ENCODE measurements at regions of chr1 and their contacts with region 1.

Region 1: GRCh38 chr1:6245086-6245868 is 1.3 kb downstream of the HES3 start:
- DNase-seq: no peak
- H3K4me3 ChIP-seq: peak overlapping the region; percentile 27
- CTCF ChIP-seq: peak; percentile 99

Region 2: DNA sequence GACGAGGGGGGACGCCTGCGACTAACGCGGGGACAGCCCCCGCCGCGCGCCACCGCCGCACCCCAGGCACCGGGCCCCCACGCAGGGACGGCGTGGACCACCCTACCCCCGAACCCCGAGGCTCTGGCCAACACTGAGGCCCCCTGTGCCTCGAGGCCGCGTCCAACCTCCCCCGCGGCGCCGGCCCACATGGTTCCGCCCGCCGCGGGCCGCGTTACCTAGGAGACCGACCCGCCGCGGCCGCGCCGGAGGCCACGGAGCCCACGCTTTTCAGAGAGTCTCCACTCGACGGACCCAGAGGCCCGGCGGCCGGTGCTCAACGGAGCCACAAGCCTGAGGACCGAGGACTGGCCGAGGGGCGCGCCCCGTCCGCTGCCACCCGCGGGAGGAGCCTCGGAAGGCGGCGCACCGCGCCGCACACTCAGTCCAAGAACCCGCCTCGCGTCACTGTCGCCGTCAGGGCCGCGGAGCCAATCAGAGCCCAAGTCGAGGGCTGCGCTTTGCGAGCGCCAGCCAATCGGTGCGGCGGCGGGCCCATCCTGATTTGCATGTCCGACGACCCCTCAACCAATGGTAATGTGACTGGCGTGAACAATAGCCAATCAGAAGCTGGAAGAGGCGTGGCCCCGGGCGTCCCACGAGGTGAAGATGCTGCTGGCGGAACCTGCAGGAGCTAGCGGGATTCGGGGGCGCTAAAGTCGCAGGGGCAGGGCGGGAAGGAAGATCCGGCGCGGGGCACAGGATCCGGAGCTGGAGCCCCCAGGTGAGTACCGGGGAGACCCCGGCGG is 253.1 kb before region 1 on chr1 and contains the start of gene NPHP4:
- CTCF ChIA-PET with region 1: no interaction called
- POLR2A ChIA-PET with region 1: no interaction called
- DNase-seq: peak; percentile 97
- H3K4me3 ChIP-seq: peak within 1 kb of the TSS; percentile 78
- CTCF ChIP-seq: no peak

Region 3: DNA sequence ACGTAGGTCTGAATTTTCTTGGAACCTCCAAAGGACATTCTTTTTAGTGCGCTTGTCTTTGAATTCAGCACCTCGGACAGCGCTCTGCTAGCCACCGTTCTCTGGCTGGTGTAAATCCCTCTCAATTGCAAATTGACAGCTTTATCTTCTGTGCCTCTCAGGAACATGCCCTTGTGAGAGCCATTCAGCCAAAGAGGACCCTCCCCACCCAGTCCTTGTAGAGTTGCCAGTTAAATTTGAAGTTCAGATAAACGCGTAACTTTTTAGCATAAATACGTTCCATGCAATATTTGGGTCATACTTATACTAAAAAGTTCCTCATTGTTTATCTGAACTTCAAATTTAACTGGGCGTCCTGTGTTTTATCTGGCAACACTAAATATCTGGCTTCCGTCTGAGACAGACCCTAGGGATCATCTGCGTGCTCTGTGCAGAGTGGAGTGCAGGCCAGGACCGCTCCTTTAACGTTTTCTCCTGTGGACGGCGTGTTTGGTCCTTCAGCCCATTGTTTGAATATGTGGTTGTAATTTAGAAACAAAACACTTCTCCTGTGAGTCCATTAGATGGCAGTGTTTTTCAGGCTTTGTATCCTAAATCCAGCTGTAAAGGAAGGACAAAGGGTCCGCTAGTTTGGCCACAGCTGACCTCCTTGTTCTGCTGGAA is 192.6 kb before region 1 on chr1:
- CTCF ChIA-PET with region 1: interaction called, 90 read pairs
- POLR2A ChIA-PET with region 1: no interaction called
- DNase-seq: no peak
- H3K4me3 ChIP-seq: no peak overlapping the region
- CTCF ChIP-seq: peak; percentile 42

Region 4: GRCh38 chr1:6269720-6270400 is 24.6 kb after region 1 on chr1:
- CTCF ChIA-PET with region 1: interaction called, 54 read pairs
- POLR2A ChIA-PET with region 1: no interaction called
- DNase-seq: no peak
- H3K4me3 ChIP-seq: no peak overlapping the region
- CTCF ChIP-seq: no peak

Region 5: GRCh38 chr1:6343506-6344405 is 98.5 kb after region 1 on chr1:
- CTCF ChIA-PET with region 1: interaction called, 537 read pairs
- POLR2A ChIA-PET with region 1: no interaction called
- DNase-seq: peak; percentile 45
- H3K4me3 ChIP-seq: no peak overlapping the region
- CTCF ChIP-seq: peak; percentile 98

Region 6: DNA sequence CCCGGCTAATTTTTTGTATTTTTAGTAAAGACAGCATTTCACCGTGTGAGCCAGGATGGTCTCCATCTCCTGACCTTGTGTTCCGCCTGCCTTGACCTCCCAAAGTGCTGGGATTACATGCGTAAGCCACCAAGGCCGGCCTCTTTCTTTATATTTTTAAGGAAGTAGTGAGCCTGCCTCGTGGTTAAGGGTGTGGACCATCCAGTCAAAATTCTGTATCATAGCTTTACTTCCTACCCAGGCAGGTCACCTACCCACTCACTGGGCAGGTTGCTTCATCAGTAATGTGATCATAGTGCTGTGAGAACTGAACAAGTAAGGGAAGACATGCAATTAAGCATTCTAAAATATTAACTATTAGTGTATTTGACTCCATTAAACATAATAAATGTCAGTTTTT is 156.4 kb after region 1 on chr1:
- CTCF ChIA-PET with region 1: interaction called, 46 read pairs
- POLR2A ChIA-PET with region 1: no interaction called
- DNase-seq: no peak
- H3K4me3 ChIP-seq: no peak overlapping the region
- CTCF ChIP-seq: no peak

Region 7: DNA sequence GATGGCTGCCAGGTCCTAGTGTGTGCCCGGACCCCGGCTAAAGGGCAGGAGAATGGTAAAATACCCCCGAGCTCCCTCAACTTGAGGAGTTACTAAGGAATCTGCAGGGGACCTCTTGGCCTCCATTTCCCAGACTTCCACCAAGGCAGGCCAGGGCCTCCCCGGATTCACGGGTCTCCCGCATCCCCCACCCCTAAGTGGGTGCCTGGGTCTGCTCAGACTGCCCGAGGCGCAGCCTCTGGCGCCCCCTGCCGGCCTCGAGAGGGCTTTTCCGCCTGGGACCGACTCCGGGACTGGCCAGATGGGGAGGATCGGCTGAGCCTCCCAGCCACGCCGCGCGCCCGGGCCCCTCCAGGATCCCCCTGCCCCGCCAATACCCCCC is 244.5 kb after region 1 on chr1:
- CTCF ChIA-PET with region 1: interaction called, 15 read pairs
- POLR2A ChIA-PET with region 1: no interaction called
- DNase-seq: no peak
- H3K4me3 ChIP-seq: peak overlapping the region; percentile 84
- CTCF ChIP-seq: peak; percentile 95

Measured in AG04449 (cell line).